ENCODE measurements at regions of chr3 and their contacts with region 1.

Region 1: DNA sequence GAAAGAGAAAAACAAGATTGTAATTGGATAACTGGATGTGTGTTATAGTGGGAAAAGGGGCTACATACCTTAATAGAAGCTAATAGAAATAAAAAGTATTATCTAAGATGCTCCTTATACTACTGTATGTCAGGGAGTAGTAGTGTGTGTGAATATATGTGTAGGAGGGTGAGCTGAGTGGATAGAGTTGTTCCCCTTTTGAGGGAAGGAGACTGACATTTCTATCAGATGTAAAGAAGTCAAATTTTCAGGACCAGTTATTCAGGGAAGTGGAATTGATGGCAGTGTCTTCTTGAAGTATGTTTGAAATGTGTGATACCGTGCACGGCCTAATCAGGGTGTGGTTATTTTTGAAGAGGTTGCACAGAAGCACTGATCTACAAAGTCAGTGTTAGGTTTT is 49.1 kb downstream of the PCOLCE2 start:
- DNase-seq: no peak
- H3K4me3 ChIP-seq: no peak overlapping the region
- H3K27ac ChIP-seq: no peak overlapping the region
- H3K4me1 ChIP-seq: no peaks in the 10 kb centered on the region
- H3K27me3 ChIP-seq: no peaks in the 10 kb centered on the region
- CTCF ChIP-seq: no peak
- EP300 ChIP-seq: no peak
- POLR2A ChIP-seq: no peak

Region 2: DNA sequence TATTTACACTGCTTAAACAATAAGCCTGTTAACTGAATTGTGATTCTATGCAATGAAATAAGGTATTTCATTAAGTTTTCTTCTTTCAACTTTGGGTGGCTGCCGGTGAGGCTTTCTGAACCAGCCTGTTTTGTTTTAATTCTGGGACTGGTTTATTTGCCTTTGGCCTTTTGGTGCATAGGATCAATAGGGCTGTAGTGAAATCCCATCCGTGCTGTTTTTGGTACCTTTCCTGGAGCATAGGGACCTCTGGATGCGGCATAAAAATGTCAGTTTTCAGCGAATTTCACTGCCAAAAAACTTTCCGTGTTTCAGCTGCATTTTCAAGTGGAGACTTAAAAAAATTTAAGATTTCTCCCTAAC is 243.1 kb before region 1 on chr3:
- intact Hi-C with region 1: no loop called
- DNase-seq: no peak
- H3K4me3 ChIP-seq: peak overlapping the region; percentile 61 to 80 (median 70)
- H3K27ac ChIP-seq: peak overlapping the region; percentile 81 to 96 (median 86)
- H3K4me1 ChIP-seq: peaks cover 0 to 39% (median 22%) of the 10 kb centered on the region in 4 donors
- H3K27me3 ChIP-seq: no peaks in the 10 kb centered on the region
- CTCF ChIP-seq: no peak
- EP300 ChIP-seq: no peak
- POLR2A ChIP-seq: no peak

Region 3: GRCh38 chr3:142694225-142694624 is 145.6 kb before region 1 on chr3:
- intact Hi-C with region 1: no loop called
- DNase-seq: peak in 1 of 2 donors; percentile 26
- H3K4me3 ChIP-seq: no peak overlapping the region
- H3K27ac ChIP-seq: no peak overlapping the region
- H3K4me1 ChIP-seq: no peaks in the 10 kb centered on the region
- H3K27me3 ChIP-seq: no peaks in the 10 kb centered on the region
- CTCF ChIP-seq: no peak
- EP300 ChIP-seq: no peak
- POLR2A ChIP-seq: no peak

Region 4: DNA sequence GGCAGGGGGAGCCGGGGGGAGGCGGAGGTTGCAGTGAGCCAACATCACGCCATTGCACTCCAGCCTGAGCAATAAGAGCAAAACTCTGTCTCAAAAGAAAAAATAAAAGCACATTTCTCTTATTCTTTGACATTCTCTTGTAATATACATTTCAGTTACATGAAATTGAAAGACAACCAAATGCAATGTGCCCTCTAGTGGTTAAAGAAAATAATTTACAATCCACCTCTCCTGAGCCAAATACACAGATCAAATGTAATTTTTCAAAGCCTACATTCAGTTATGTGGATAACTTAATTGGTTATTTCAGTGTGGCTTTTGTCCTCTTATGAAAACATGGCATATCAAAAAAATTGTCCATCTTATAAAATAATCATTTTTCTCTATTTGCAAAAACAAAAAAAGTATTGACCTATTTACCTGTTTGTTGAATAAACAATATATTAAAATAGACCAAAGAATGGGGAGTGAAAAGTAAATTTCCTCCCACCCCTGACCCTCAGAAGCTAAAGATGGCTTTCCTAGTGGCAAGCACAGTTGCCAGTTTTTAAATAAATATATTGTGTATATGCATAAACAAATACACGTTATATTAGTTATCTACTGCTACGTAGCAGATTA is 147.4 kb after region 1 on chr3:
- intact Hi-C with region 1: loop called (anchors 10 kb)
- DNase-seq: peak in 1 of 2 donors; percentile 64
- H3K4me3 ChIP-seq: no peak overlapping the region
- H3K27ac ChIP-seq: no peak overlapping the region
- H3K4me1 ChIP-seq: no peaks in the 10 kb centered on the region
- H3K27me3 ChIP-seq: peaks cover 0 to 14% (median under 1%) of the 10 kb centered on the region in 3 donors
- CTCF ChIP-seq: peak in 5 of 7 experiments; percentile 43 to 66 (median 54)
- EP300 ChIP-seq: no peak
- POLR2A ChIP-seq: no peak

Measured in stomach (tissue), 19 donors.